Activated T-helper 2 cell treated with anti-CD3 and anti-CD28 coated beads, Interferon-gamma antibody, Interleukin-2, Interleukin-4, amounts not matched to agents 10 μg/mL and 5 μg/mL and 100 μg/mL, durations not matched to agents 14 hours and 24 hours and 36 hours (primary cell): ENCODE measurements at regions of chr2 and their contacts with region 1.

Region 1: DNA sequence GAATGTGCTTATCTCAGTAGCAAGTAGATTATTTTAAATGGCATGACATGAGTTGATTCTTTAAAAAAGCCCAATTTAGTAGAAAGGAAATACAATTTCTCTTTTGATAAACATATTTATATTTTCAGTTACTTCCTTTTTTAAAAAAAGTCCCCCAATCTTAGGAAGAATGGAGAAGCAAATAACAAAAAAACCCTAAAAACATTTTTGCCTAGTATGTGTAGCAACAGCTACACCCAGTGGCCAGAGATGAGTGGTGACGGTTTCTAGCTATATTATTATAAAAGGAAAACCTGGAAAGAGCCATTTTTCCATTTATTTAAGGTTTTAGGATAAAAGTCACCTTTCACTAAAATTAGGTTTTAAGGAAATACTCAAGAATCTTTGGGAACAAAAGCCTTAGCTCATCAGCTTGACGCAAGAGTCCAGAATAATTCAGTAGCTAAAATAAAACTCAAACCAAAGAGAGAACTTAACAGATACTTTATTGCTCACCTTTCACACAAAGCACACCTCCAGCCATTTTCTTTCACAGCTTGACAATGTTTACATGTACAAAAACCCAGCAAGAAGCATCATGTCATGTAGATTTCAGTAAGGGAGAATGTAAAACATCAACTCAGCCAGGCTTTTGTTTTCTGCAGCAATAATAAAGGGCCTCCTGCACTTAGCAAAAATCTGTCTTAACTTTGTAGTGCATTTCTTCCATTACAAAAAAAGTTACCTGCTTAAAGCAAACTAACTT is 15.7 kb downstream of the FAM98A start:
- DNase-seq: no peak
- H3K4me3 Mint-ChIP-seq: no peak overlapping the region
- H3K27ac Mint-ChIP-seq: no peak overlapping the region
- H3K4me1 Mint-ChIP-seq: peaks cover 19% of the 10 kb centered on the region
- H3K27me3 Mint-ChIP-seq: no peaks in the 10 kb centered on the region

Region 2: DNA sequence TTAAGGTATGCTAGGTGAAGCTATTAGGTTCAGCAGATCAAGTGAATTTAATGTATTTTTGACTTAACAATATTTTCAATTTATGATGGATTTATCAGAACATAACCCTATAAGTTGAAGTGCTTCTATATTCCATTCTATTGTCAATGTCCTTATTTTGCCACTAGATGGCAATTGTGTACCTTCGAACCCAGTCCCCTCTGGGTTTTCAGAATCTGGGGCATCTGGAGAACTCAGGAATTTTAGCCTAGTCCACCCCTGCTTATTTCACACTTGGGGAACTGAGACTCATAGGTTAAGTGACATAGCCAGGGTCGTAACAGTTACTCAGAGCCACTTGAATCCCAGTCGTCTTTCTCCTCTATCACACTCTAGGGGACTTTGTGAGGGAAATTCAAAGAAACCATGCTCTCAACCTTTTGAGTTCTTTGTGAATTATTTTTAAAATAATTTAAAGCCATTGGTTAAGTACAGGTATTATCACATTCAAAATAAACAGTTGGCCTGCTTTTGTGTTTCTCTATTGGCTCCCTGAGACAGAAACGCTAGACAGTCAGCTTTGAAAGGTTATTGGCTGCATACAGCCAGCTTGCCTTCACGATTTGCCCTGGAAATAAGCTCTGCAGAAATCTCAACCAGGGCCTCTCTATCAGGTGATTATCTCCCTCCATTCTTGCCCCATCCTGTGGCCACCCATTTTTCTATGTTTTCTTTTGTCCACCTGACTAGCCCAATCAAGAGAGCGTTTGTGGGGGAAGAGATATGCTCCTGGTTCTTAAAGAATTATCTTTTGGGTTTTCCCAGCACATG is 810.5 kb before region 1 on chr2:
- intact Hi-C with region 1: loop called (anchors 5 kb)
- DNase-seq: no peak
- H3K4me3 Mint-ChIP-seq: no peak overlapping the region
- H3K27ac Mint-ChIP-seq: no peak overlapping the region
- H3K4me1 Mint-ChIP-seq: peaks cover 20% of the 10 kb centered on the region
- H3K27me3 Mint-ChIP-seq: no peaks in the 10 kb centered on the region

Region 3: GRCh38 chr2:33321236-33321771 is 262.1 kb before region 1 on chr2:
- intact Hi-C with region 1: loop called (anchors 5 kb)
- DNase-seq: peak; percentile 41
- H3K4me3 Mint-ChIP-seq: peak overlapping the region; percentile 51
- H3K27ac Mint-ChIP-seq: peak overlapping the region; percentile 94
- H3K4me1 Mint-ChIP-seq: peaks cover 32% of the 10 kb centered on the region
- H3K27me3 Mint-ChIP-seq: peaks cover under 1% of the 10 kb centered on the region

Region 4: DNA sequence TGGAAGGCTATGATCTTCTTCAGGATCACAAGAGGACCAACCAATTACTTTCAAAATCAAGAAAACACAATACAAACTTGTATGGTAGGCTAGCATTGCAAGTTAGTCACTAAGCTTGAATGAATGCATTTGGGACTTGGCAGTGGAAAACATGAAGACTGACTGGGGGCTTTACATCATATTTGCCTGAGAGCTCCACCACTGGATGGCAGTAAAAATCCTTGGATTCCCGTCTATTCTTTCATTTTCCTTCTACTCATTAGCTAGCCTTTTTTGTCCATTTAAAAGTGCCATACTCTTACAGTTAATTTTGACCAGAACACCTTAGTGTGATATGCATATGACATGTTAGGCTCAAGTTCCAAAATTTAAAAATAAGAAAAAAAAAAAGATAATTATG is 170.4 kb before region 1 on chr2:
- intact Hi-C with region 1: loop called (anchors 2 kb)
- DNase-seq: no peak
- H3K4me3 Mint-ChIP-seq: no peak overlapping the region
- H3K27ac Mint-ChIP-seq: no peak overlapping the region
- H3K4me1 Mint-ChIP-seq: no peaks in the 10 kb centered on the region
- H3K27me3 Mint-ChIP-seq: peaks cover 10% of the 10 kb centered on the region

Region 5: DNA sequence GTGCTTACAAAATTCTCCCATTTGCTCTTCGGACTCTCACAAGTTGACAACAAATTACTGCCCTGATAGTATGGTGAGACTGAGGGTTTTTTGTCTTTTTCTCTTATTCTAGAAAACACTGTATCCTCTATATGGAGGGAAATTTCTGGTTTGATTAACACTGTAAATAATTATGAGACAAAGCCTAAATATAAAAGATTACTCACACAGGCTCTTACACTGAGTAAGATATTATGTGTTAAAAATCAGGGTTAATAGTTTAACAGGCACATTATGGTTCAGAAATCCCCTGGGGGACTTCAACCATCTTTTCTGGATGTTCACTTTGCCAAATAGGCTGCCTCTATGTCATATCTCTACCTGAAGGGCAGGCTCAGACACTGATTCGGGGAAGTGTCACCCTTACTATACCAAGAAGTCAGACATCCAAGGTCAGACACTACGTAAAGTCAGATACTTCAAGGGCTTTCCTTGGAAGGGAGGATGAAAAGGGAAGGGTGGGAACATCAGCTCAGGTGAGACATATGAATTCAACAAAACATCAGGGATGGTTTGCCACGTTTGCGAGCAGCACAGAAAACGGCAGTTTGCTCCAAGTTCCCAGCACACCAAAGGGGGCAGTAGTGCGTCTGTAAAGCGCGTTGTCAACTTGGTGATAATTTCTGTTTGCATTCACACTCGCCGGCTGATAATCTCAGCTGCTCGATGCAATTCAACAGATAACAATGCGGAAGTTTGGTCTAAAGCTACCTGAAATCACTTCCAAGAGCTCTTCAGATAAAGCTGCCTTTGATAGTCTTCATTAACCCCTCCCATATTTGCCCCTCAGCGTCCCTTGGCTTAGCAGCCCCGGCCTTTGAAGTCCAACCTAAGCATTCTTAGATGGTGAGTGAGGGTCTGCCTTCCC is 107.9 kb before region 1 on chr2:
- intact Hi-C with region 1: loop called (anchors 1 kb)
- DNase-seq: peak; percentile 77
- H3K4me3 Mint-ChIP-seq: peak overlapping the region; percentile 83
- H3K27ac Mint-ChIP-seq: peak overlapping the region; percentile 96
- H3K4me1 Mint-ChIP-seq: peaks cover 30% of the 10 kb centered on the region
- H3K27me3 Mint-ChIP-seq: peaks cover 8% of the 10 kb centered on the region

Region 6: DNA sequence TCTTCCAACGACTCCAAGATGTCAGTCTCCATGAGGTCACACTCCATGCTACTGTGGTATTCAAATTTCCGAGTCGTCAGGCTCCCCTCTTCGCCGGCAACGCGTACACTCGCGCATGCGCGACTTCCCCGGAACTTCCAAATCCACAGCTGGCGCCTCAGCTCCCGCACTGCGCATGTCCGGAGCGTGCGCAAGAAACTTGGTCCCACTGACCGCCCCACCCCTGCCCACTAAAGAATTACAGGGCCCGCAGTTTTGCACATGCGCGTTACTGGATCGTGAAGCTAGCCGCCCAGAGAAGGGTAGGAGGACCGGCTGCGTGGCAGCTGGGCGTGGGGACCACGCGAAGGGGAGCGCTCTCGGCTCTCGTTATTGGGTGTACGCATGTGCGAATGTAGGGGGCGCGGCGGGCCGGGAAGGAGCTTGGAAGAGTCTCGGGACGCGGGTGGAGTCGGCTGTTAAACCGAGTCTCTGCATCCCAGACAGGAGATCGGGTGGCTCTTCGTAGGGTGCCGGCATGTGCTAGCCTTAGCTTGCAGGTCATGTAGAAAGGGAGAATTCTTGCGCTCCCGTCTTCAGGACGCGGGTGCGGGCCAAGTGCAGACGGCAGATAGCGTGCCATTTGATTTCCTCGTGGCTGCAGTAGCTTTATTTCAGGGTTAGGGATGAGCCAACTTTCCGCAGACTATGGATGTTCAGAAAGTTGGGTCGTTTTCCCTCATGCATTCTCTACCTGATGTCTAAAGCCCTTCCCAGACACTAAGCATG is 16.0 kb after region 1 on chr2 and contains the start of gene FAM98A:
- intact Hi-C with region 1: no loop called
- DNase-seq: peak; percentile 98
- H3K4me3 Mint-ChIP-seq: peak within 1 kb of the TSS; percentile 88
- H3K27ac Mint-ChIP-seq: peak within 1 kb of the TSS; percentile 97
- H3K4me1 Mint-ChIP-seq: peaks cover 20% of the 10 kb centered on the region
- H3K27me3 Mint-ChIP-seq: peaks cover 3% of the 10 kb centered on the region
- total RNA-seq, gene FAM98A: 62.7 and 63.8 TPM in 2 replicates